ENCODE measurements at regions of chr18 and their contacts with region 1.

Region 1: GRCh38 chr18:51110073-51110803 is 80.2 kb downstream of the SMAD4 start:
- DNase-seq: peak; percentile 57
- H3K4me3 Mint-ChIP-seq: no peak overlapping the region
- H3K27ac Mint-ChIP-seq: no peak overlapping the region
- H3K4me1 Mint-ChIP-seq: no peaks in the 10 kb centered on the region
- H3K27me3 Mint-ChIP-seq: no peaks in the 10 kb centered on the region
- CTCF ChIP-seq: peak; percentile 99

Region 2: DNA sequence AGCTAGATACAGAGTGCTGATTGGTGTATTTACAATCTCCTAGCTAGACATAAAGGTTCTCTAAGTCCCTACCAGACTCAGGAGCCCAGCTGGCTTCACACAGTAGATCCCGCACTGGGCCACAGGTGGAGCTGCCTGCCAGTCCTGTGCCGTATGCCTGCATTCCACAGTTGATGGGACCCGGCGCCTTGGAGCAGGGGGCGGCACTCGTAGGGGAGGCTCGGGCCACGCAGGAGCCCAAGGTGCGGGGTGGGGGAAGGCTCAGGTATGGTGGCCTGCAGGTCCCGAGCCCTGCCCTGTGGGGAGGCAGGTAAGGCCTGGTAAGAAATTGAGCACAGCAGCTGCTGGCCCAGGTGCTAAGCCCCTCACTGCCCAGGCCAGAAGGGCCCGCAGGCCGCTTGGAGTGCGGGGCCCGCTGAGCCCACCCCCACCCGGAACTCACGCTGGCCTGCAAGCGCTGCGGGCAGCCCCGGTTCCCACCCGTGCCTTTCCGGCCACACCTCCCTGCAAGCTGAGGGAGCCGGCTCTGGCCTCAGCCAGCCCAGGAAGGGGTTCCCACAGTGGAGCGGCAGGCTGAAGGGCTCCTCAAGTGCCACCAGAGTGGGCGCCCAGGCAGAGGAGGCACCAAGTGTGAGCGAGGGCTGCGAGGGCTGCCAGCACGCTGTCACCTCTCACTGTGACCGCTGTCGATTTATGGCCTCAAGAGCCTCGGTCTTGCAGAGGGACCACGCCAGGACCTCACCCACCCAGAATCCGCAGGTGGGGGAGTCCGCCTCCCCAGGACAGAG is 10.8 kb after region 1 on chr18:
- CTCF ChIA-PET with region 1: interaction called, 18 read pairs
- POLR2A ChIA-PET with region 1: no interaction called
- intact Hi-C with region 1: no loop called
- DNase-seq: no peak
- H3K4me3 Mint-ChIP-seq: no peak overlapping the region
- H3K27ac Mint-ChIP-seq: no peak overlapping the region
- H3K4me1 Mint-ChIP-seq: no peaks in the 10 kb centered on the region
- H3K27me3 Mint-ChIP-seq: no peaks in the 10 kb centered on the region
- CTCF ChIP-seq: no peak

Region 3: DNA sequence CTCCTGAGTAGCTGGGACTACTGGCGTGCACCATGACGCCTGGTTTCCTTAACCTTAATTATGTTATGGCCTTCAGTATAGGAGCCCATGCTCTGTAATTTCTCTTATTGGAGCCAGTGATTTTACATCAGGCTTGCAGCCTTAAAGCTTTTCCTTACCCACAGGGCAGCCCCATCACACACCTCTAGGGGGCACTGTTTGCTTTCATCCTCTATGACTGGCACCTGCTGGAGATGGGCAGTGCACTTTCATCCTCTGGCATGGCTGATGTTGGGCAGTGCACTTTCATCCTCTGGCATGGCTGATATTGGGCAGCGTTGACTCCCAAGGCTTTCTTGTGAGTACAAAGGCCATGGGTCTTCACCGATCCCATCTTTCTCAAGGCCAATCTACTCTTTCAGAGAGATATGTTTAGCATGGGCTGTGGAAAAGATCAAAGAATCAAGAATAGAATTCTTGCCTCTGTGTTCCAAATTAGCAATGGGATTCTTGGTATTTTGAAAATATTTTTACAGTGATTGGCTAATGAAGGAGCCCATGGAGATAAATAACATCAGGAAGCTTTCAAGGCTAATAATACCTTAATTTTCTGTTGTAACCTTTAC is 167.9 kb after region 1 on chr18:
- CTCF ChIA-PET with region 1: interaction called, 5 read pairs
- POLR2A ChIA-PET with region 1: no interaction called
- intact Hi-C with region 1: loop called (anchors 2 kb)
- DNase-seq: peak; percentile 87
- H3K4me3 Mint-ChIP-seq: no peak overlapping the region
- H3K27ac Mint-ChIP-seq: no peak overlapping the region
- H3K4me1 Mint-ChIP-seq: no peaks in the 10 kb centered on the region
- H3K27me3 Mint-ChIP-seq: no peaks in the 10 kb centered on the region
- CTCF ChIP-seq: peak; percentile 87

Region 4: GRCh38 chr18:51537487-51537886 is 427.2 kb after region 1 on chr18:
- CTCF ChIA-PET with region 1: interaction called, 18 read pairs
- POLR2A ChIA-PET with region 1: interaction called, 3 read pairs
- intact Hi-C with region 1: loop called (anchors 1 kb)
- DNase-seq: peak; percentile 74
- H3K4me3 Mint-ChIP-seq: no peak overlapping the region
- H3K27ac Mint-ChIP-seq: no peak overlapping the region
- H3K4me1 Mint-ChIP-seq: no peaks in the 10 kb centered on the region
- H3K27me3 Mint-ChIP-seq: no peaks in the 10 kb centered on the region
- CTCF ChIP-seq: peak; percentile 54

Region 5: DNA sequence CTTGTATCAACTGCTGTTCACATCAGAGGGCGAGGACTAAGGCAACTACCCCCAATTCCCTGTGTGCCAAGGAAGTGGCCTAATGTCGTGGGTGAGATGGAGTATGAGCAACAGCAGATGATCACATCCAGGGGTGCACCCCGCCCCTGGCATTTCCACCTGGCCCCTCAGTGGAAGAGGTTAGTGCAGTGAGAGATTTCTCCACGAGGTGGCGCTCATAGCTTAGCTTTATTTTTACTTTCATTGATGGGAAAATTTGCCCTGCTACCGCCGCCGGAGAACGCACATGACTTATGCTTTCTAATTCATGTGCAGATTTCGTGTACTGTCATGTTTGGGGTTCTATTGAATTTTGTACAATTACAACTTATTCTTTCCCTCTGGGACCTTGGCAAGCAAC is 557.9 kb after region 1 on chr18:
- CTCF ChIA-PET with region 1: interaction called, 4 read pairs
- POLR2A ChIA-PET with region 1: no interaction called
- intact Hi-C with region 1: loop called (anchors 2 kb)
- DNase-seq: peak; percentile 70
- H3K4me3 Mint-ChIP-seq: no peak overlapping the region
- H3K27ac Mint-ChIP-seq: no peak overlapping the region
- H3K4me1 Mint-ChIP-seq: peaks cover 6% of the 10 kb centered on the region
- H3K27me3 Mint-ChIP-seq: peaks cover 25% of the 10 kb centered on the region
- CTCF ChIP-seq: peak; percentile 90

Region 6: DNA sequence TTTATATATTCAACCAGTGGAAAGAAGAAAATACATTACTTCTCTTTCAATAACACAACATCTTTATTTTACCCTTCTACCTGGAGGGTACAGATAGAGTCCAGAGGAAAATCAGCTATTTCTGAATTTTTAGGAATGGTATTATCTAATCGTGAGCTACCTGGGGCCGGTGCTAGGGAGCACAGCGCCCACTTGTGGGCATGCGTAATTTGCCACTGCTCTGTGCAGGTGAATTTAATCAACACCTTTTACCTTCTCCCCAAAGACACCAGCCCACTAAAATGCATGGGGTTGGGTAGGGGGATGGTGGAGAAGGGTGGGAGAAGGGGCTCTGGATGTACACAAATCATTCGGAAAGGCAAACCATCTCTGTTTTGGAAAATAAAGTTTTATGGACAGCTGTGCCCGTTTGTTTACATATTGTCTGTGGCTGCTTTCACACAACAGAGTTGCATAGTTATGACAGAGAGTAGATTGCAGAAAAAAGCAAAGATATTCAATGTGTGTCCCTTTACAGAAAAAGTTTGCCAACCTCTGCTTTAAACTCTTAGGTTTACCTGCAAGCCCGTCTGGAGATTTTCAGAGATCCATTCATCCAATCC is 1178.3 kb after region 1 on chr18:
- CTCF ChIA-PET with region 1: no interaction called
- POLR2A ChIA-PET with region 1: no interaction called
- intact Hi-C with region 1: loop called (anchors 5 kb)
- DNase-seq: peak; percentile 49
- H3K4me3 Mint-ChIP-seq: no peak overlapping the region
- H3K27ac Mint-ChIP-seq: no peak overlapping the region
- H3K4me1 Mint-ChIP-seq: no peaks in the 10 kb centered on the region
- H3K27me3 Mint-ChIP-seq: no peaks in the 10 kb centered on the region
- CTCF ChIP-seq: peak; percentile 86